Activated B cell treated with CpG ODN at 0.5 μM for 24 hours (primary cell): ENCODE measurements at regions of chr16 and their contacts with region 1.

Region 1: DNA sequence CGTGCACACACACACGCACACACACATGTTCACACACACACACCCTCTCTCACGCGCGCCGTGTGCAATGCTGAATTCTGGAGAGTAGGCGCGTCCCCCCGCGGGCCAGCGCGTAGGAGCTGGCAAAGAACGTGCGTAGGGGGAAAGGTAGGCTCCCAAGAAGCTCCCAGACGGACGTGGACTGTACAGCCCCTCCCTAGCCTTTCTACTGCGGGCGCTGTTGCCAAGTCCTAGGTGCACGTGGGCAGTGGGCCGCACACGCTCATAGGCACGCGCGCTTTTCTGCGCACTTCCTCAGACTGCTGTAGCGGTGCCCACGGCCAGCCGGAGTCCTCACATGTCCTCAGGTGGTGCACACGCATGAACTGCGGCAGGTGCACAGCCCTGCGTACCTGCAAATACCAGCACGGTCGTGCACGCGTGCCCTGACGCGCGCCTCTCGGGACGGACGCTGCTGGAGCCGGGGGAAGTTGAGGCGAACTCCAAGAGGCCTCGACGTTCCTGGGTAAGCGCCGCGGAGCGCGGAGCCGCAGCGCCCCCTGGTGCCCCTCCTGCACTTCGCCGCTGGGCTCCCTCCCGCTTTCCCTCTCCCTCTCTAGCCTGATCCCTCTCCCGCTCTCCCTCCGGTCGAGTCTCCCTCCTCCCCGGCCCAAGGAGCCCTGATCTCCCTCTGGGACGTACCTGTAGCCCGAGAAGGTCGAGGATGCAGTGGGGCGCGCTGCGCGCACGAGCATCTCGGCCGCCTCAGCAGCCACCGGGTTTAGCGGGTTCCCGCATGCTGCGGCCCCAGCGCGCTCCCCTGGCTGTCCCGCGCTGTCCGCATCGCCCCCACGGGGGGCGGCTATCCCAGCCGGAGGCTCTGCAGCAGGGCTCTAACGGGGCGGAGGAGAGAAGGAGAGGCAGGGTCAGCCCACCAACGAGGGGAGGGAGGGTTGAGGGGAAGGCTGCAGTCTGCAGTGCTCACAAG is 749 bp downstream of the GRIN2A start:
- DNase-seq: peak; percentile 59
- ATAC-seq: peak; percentile 46
- H3K4me3 Mint-ChIP-seq: peak overlapping the region; percentile 78
- H3K27ac Mint-ChIP-seq: no peak overlapping the region
- H3K4me1 Mint-ChIP-seq: peaks cover 24% of the 10 kb centered on the region
- H3K27me3 Mint-ChIP-seq: peaks cover 57% of the 10 kb centered on the region
- CTCF ChIP-seq: peak; percentile 54

Region 2: GRCh38 chr16:9258423-9259051 is 922.9 kb before region 1 on chr16:
- CTCF ChIA-PET with region 1: interaction called, 4 read pairs
- POLR2A ChIA-PET with region 1: no interaction called
- intact Hi-C with region 1: loop called (anchors 2 kb)
- DNase-seq: no peak
- ATAC-seq: no peak
- H3K4me3 Mint-ChIP-seq: no peak overlapping the region
- H3K27ac Mint-ChIP-seq: no peak overlapping the region
- H3K4me1 Mint-ChIP-seq: no peaks in the 10 kb centered on the region
- H3K27me3 Mint-ChIP-seq: peaks cover 27% of the 10 kb centered on the region
- CTCF ChIP-seq: no peak

Region 3: GRCh38 chr16:9647981-9648712 is 533.3 kb before region 1 on chr16:
- CTCF ChIA-PET with region 1: no interaction called
- POLR2A ChIA-PET with region 1: no interaction called
- intact Hi-C with region 1: loop called (anchors 5 kb)
- DNase-seq: no peak
- ATAC-seq: no peak
- H3K4me3 Mint-ChIP-seq: no peak overlapping the region
- H3K27ac Mint-ChIP-seq: no peak overlapping the region
- H3K4me1 Mint-ChIP-seq: no peaks in the 10 kb centered on the region
- H3K27me3 Mint-ChIP-seq: peaks cover 16% of the 10 kb centered on the region
- CTCF ChIP-seq: no peak

Region 4: DNA sequence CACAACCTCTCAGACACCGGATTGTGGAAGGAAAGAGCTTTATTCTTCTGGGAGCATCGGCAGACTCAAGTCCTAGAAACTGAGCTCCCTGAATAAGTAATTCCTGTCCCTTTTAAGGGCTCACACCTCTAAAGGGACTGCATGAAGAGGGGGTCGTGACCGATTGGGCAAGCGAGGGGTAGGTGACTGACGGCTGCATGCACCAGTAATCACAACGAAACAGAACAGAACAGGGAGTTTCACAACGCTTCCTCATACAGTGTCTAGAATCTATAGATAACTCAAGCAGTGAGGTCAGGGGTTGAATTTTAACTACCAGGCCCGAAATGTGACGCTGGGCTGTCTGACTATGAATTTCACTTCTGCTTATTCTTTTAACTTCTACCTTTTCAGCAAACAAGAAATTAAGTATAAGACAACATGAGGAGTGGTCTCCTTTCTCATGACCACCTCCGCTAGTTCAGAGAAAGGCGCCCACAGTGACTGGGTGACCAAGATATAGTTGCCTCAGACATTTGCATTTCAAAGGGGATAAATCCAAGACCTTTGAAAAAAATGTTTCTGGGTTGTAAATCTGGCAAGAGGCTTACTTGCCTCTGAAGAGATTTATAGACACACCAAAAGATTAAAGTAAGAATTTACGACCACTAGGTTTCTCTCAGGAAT is 116.0 kb after region 1 on chr16:
- CTCF ChIA-PET with region 1: no interaction called
- POLR2A ChIA-PET with region 1: no interaction called
- intact Hi-C with region 1: no loop called
- DNase-seq: peak; percentile 43
- ATAC-seq: peak; percentile 94
- H3K4me3 Mint-ChIP-seq: peak overlapping the region; percentile 69
- H3K27ac Mint-ChIP-seq: peak overlapping the region; percentile 97
- H3K4me1 Mint-ChIP-seq: peaks cover 62% of the 10 kb centered on the region
- H3K27me3 Mint-ChIP-seq: no peaks in the 10 kb centered on the region
- CTCF ChIP-seq: no peak